Natural killer cell (primary cell): ENCODE measurements at regions of chr1 and their contacts with region 1.

Region 1: GRCh38 chr1:152621993-152622392 is 910 bp downstream of the LCE3A start:
- DNase-seq: no peak
- ATAC-seq: no peak
- H3K4me3 ChIP-seq: no peak overlapping the region
- H3K4me3 Mint-ChIP-seq: no peak overlapping the region
- H3K27ac ChIP-seq: no peak overlapping the region
- H3K27ac Mint-ChIP-seq: no peak overlapping the region
- H3K4me1 ChIP-seq: peaks cover 8% of the 10 kb centered on the region
- H3K4me1 Mint-ChIP-seq: peaks cover 0 to 9% of the 10 kb centered on the region in 2 donors
- H3K27me3 ChIP-seq: no peaks in the 10 kb centered on the region
- H3K27me3 Mint-ChIP-seq: peaks cover 14 to 22% of the 10 kb centered on the region in 2 donors
- CTCF ChIP-seq: no peak

Region 2: GRCh38 chr1:152582647-152583046 is 39.3 kb before region 1 on chr1:
- intact Hi-C with region 1: loop called (anchors 1 kb)
- DNase-seq: no peak
- ATAC-seq: no peak
- H3K4me3 ChIP-seq: no peak overlapping the region
- H3K4me3 Mint-ChIP-seq: no peak overlapping the region
- H3K27ac ChIP-seq: no peak overlapping the region
- H3K27ac Mint-ChIP-seq: no peak overlapping the region
- H3K4me1 ChIP-seq: no peaks in the 10 kb centered on the region
- H3K4me1 Mint-ChIP-seq: no peaks in the 10 kb centered on the region
- H3K27me3 ChIP-seq: peaks cover 4% of the 10 kb centered on the region
- H3K27me3 Mint-ChIP-seq: peaks cover 2 to 7% of the 10 kb centered on the region in 2 donors
- CTCF ChIP-seq: no peak